ENCODE measurements at regions of chr4 and their contacts with region 1.

Region 1: GRCh38 chr4:138938366-138938690 is 77.3 kb upstream of the NOCT start:
- DNase-seq: peak; percentile 32
- H3K4me3 ChIP-seq: no peak overlapping the region
- H3K27ac ChIP-seq: no peak overlapping the region
- H3K27me3 ChIP-seq: no peaks in the 10 kb centered on the region
- CTCF ChIP-seq: peak; percentile 60

Region 2: GRCh38 chr4:138798404-138798803 is 139.9 kb before region 1 on chr4:
- CTCF ChIA-PET with region 1: no interaction called
- POLR2A ChIA-PET with region 1: no interaction called
- DNase-seq: no peak
- H3K4me3 ChIP-seq: no peak overlapping the region
- H3K27ac ChIP-seq: no peak overlapping the region
- H3K27me3 ChIP-seq: peaks cover 33% of the 10 kb centered on the region
- CTCF ChIP-seq: no peak

Region 3: DNA sequence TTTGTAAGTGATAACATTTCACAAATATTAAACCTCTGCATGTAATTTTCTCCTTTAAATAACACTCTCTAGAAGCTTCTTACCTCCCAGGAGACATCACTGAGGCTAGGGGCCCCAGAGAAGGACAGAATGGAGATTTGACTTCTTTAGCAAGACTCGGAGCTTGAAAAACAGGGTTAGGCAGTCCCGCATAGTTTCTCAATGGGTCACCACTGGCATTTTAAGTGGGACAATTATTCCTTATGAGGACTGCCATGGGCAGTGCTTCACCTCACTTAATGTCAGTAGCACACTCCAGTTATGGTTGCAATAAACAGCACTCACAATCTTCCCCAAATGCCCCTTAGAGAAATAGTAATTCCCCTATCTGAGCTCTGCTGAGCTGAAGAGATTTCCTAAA is 10.6 kb after region 1 on chr4:
- CTCF ChIA-PET with region 1: interaction called, 18 read pairs
- POLR2A ChIA-PET with region 1: no interaction called
- DNase-seq: no peak
- H3K4me3 ChIP-seq: no peak overlapping the region
- H3K27ac ChIP-seq: no peak overlapping the region
- H3K27me3 ChIP-seq: no peaks in the 10 kb centered on the region
- CTCF ChIP-seq: no peak

Measured in AG04450 (cell line).